ENCODE measurements at regions of chr10 and their contacts with region 1.

Region 1: DNA sequence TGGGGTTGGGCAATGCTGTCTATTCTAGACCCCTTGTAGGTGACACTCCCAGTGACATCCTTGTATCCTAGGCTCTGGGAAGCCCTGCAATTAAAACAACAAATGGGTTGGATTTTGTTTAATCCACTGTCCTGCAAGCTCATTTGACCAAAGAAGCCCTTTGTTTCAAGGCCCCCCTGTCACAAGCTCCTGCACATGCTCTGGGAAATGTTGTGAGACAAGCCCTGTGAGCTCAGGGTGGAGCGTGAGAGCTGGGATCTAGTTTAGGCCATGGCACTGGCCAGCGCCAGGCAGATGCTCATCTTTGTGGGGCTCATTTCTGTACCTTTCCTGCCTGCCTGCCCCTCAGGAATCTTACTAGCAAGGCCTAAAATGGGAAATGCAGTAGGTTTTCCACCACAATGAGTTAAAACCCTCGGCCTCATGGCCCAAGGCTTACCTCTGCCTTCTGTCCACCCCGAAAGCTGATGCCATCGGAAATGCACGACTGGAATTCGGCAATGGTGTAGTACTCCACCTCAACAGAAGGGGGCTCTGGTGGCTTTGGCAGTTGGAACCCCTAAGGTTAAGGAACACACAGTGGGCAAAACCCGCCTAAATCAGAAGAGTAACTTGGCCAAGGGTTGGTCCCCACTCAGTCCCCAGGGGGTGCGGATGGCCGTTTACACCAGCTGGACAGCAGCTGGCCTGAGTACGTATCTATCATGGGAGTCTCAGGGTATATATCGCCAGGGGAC is 112.0 kb downstream of the NEURL1 start:
- DNase-seq: peak in 1 of 2 donors; percentile 71
- ATAC-seq: peak; percentile 59
- H3K4me3 ChIP-seq: no peak overlapping the region
- H3K27ac ChIP-seq: no peak overlapping the region
- H3K4me1 ChIP-seq: no peaks in the 10 kb centered on the region
- H3K27me3 ChIP-seq: no peaks in the 10 kb centered on the region

Region 2: GRCh38 chr10:103192451-103193106 is 412.9 kb before region 1 on chr10:
- intact Hi-C with region 1: no loop called
- DNase-seq: peak; percentile 93 to 94
- ATAC-seq: peak; percentile 85
- H3K4me3 ChIP-seq: peak overlapping the region; percentile 80 to 93
- H3K27ac ChIP-seq: peak overlapping the region; percentile 98
- H3K4me1 ChIP-seq: peaks cover 0 to 2% of the 10 kb centered on the region in 2 donors
- H3K27me3 ChIP-seq: no peaks in the 10 kb centered on the region

Region 3: DNA sequence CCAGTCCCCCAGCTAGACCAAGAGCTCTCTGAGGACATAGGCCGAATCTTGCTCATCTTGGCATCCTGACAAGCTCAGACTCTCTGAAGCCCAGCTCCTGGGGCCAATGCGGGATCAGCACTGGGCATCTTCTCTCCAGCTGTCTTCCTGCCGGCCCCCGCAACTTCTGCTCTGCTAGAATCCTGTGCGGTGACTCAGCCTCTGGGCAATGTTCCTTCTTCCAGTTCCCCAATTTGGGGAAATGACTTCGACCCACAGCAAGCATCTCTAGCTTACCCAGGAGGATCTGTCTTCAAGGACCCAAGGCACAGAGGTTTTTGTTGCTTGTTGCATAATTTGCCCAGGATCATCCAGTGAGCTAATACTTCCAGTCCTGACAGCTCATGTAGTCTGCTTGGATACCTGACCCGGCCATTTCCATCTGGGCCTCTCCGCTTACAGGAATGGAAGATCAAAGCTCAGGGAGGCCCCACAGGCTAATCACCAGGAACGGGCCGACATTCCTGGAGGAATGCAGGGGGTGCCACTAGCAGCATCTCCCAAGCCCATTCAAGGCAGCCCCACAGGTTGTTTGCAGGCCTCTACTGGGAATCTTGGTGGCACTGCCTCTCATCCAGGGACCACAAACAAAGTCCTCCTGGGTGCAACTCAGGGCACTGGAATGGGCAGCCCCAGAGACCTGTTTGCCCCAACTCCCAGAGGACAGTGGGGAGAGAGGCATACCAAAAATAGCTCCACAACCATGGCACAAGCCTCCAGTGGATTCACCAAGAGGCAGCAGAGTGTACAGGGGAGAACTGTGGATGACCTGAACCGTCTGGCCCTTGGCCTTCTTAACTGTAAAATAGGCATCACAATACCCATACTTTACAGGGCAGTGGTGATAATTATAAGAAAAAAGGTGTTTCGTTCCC is 39.9 kb after region 1 on chr10:
- intact Hi-C with region 1: loop called in 1 of 2 experiments (anchors 5 kb)
- DNase-seq: peak; percentile 91 to 93
- ATAC-seq: peak; percentile 39
- H3K4me3 ChIP-seq: no peak overlapping the region
- H3K27ac ChIP-seq: peak overlapping the region in 1 of 2 donors; percentile 69
- H3K4me1 ChIP-seq: peaks cover 2 to 8% of the 10 kb centered on the region in 2 donors
- H3K27me3 ChIP-seq: no peaks in the 10 kb centered on the region

Region 4: DNA sequence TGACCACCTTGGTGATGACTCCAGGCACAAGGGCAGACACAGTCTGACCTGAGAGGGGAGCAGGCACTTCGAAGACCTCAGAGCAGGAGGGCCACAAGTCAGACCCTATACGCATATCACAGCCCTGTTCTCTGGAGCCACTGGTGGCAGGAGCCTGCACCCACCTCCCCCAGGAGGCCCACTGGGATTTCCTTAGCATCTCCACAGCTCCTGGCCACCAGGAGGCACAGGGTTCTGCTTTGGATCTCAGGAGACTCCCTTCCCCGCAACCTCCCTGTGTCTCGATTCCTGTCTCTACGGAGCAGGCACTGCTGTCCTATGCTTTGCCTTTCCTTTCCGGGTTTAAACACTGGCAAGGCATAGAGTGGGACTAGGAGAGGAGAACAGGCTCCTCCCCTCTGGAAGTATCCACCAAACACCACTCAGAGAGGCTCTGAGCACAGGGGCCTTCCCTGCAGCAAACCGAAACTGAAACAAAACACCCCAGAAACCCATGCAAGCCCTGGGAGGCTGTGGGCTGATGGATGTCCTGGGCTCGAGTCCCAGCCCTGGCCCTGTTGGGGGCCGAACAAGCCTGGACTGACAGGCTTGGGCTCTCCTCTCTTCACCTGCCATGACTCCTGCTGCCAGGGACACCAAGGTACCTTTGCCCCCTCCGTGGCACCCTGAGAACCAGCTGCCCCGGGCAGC is 54.3 kb after region 1 on chr10:
- intact Hi-C with region 1: loop called in 1 of 2 experiments (anchors 2 kb)
- DNase-seq: peak in 1 of 2 donors; percentile 82
- ATAC-seq: peak; percentile 81
- H3K4me3 ChIP-seq: peak overlapping the region; percentile 42 to 70
- H3K27ac ChIP-seq: peak overlapping the region in 1 of 2 donors; percentile 92
- H3K4me1 ChIP-seq: no peaks in the 10 kb centered on the region
- H3K27me3 ChIP-seq: no peaks in the 10 kb centered on the region

Region 5: GRCh38 chr10:103685880-103686669 is 80.5 kb after region 1 on chr10:
- intact Hi-C with region 1: loop called (anchors 1 kb)
- DNase-seq: peak; percentile 80 to 93
- ATAC-seq: peak; percentile 86
- H3K4me3 ChIP-seq: no peak overlapping the region
- H3K27ac ChIP-seq: no peak overlapping the region
- H3K4me1 ChIP-seq: no peaks in the 10 kb centered on the region
- H3K27me3 ChIP-seq: no peaks in the 10 kb centered on the region

Region 6: DNA sequence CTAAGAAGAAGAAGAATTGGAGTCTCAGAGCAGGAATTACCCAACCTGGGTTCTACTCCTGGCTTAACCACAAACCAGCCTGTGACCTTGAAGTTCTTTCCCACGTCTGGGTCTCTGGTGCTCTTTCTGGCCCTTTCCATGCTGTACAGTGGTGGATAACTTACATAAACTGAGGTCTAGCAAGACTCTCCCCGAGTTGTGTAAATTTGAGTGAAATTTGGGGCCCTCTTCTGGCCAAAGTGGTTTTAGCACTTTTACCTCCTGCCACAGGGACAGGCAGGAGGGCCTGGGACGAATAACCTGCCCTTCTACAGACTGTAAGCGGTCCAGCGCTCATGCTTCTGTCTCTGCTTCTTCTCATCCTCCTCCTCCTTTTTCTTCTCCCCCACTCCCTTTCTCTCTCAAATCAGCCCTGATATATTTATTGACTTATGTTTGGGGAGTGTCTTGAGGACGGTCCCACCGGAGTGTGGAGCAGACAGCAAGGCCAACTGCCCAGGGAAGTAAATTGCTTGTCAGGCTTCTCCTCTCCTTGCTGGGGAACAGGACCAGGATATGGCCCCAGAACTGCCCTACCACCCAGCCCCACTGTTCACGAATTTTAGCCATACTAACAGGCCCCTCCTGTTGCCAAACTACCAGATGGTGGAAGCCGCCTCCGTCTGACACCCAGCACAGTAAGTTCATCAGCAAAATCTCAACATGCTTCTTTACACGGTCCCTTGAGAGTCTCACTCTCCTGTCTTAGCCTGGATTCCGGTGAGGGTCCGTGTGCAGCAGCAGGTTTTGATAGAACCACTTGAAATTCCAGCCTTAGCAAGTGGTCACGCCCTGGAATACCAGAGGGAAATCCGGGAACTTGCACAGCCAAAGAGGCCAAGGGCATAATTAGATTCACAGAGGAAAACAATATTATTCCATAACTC is 253.9 kb after region 1 on chr10:
- intact Hi-C with region 1: loop called in 1 of 2 experiments (anchors 10 kb)
- DNase-seq: no peak
- ATAC-seq: peak; percentile 78
- H3K4me3 ChIP-seq: no peak overlapping the region
- H3K27ac ChIP-seq: no peak overlapping the region
- H3K4me1 ChIP-seq: no peaks in the 10 kb centered on the region
- H3K27me3 ChIP-seq: no peaks in the 10 kb centered on the region

Measured in aorta (tissue), 5 donors.